A673 (cell line): ENCODE measurements at regions of chrX and their contacts with region 1.

Region 1: DNA sequence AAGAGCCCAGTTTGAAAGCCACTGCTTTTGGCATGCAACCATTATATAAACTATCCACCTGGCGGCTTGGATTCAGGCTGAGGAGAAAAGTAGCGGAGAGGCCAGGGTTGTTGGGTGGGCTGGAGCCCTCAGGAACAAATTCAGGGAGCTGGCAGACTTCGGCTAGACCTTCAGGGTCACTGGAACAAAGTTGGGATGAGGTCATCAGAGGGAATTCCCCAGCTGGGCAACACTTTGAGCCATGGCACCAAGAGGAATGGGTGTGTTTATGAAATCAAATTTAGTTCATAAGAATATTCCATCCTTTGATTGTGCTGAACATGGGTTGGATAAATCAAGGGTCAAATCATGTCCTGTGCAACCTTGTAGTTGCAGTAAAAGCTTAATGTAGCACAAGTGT is 22.0 kb downstream of the MTMR1 start:
- DNase-seq: no peak
- H3K4me3 ChIP-seq: no peak overlapping the region
- H3K27ac ChIP-seq: no peak overlapping the region
- H3K4me1 ChIP-seq: no peaks in the 10 kb centered on the region
- H3K27me3 ChIP-seq: no peaks in the 10 kb centered on the region
- CTCF ChIP-seq: no peak

Region 2: DNA sequence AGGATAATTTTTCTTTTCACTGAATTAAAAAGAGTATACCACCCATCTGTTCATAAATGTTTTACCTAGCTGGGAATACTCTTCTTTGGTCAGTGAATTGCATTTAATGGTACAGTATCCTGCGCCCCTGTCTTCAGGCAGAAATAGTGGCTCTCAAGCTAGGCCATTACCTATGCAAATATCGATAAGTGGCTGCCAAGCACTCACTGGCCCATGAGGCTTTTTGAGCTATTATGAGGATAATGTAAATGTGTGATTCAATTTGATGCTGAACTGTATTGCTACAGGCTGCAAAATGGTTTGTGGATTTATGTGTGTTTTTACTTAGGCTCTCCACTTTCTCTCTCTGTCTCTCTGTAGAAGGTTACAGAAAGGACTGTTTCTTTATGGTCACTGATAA is 52.1 kb before region 1 on chrX:
- CTCF ChIA-PET with region 1: interaction called, 12 read pairs
- POLR2A ChIA-PET with region 1: no interaction called
- intact Hi-C with region 1: no loop called
- DNase-seq: no peak
- H3K4me3 ChIP-seq: no peak overlapping the region
- H3K27ac ChIP-seq: no peak overlapping the region
- H3K4me1 ChIP-seq: no peaks in the 10 kb centered on the region
- H3K27me3 ChIP-seq: no peaks in the 10 kb centered on the region
- CTCF ChIP-seq: no peak

Region 3: DNA sequence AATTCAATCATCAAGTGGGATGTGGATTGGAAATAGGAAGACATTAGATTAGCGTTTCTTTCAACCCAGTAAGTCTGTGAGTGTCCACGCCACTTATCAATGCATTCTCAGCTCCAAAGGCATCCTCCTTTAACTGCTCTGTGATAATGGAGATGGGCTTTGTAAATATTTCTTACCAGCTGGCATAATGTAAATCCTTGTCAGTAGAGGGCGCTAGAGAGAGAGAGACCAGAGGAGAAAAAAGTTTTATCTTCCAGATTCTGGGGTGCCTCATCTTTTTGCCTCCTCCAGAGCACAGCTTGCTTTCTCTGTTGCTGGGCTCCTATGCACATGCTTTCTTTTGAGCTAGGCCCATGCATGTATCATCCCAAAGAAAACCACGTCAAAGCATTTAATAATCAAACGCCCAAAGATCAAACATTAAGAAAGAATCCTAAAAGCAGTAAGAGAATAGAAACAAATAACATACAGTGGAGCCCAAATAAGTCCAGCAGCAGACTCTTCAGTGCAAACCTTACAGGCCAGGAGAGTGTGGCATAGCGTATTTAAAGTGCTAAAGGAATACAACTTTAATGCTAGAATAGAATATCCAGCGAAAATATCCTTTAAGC is 31.5 kb before region 1 on chrX:
- CTCF ChIA-PET with region 1: interaction called, 10 read pairs
- POLR2A ChIA-PET with region 1: no interaction called
- intact Hi-C with region 1: no loop called
- DNase-seq: peak; percentile 72
- H3K4me3 ChIP-seq: no peak overlapping the region
- H3K27ac ChIP-seq: no peak overlapping the region
- H3K4me1 ChIP-seq: no peaks in the 10 kb centered on the region
- H3K27me3 ChIP-seq: no peaks in the 10 kb centered on the region
- CTCF ChIP-seq: peak; percentile 67